ENCODE measurements at regions of chr5 and their contacts with region 1.

Region 1: GRCh38 chr5:134609232-134609851 is 23.3 kb downstream of the SAR1B start:
- DNase-seq: no peak
- H3K4me3 ChIP-seq: no peak overlapping the region
- H3K27ac ChIP-seq: no peak overlapping the region
- H3K4me1 ChIP-seq: no peaks in the 10 kb centered on the region
- H3K27me3 ChIP-seq: no peaks in the 10 kb centered on the region
- CTCF ChIP-seq: no peak

Region 2: GRCh38 chr5:134626369-134627014 is 17.1 kb after region 1 on chr5:
- CTCF ChIA-PET with region 1: no interaction called
- POLR2A ChIA-PET with region 1: interaction called, 14 read pairs
- intact Hi-C with region 1: no loop called
- DNase-seq: no peak
- H3K4me3 ChIP-seq: no peak overlapping the region
- H3K27ac ChIP-seq: no peak overlapping the region
- H3K4me1 ChIP-seq: no peaks in the 10 kb centered on the region
- H3K27me3 ChIP-seq: no peaks in the 10 kb centered on the region
- CTCF ChIP-seq: no peak

Region 3: DNA sequence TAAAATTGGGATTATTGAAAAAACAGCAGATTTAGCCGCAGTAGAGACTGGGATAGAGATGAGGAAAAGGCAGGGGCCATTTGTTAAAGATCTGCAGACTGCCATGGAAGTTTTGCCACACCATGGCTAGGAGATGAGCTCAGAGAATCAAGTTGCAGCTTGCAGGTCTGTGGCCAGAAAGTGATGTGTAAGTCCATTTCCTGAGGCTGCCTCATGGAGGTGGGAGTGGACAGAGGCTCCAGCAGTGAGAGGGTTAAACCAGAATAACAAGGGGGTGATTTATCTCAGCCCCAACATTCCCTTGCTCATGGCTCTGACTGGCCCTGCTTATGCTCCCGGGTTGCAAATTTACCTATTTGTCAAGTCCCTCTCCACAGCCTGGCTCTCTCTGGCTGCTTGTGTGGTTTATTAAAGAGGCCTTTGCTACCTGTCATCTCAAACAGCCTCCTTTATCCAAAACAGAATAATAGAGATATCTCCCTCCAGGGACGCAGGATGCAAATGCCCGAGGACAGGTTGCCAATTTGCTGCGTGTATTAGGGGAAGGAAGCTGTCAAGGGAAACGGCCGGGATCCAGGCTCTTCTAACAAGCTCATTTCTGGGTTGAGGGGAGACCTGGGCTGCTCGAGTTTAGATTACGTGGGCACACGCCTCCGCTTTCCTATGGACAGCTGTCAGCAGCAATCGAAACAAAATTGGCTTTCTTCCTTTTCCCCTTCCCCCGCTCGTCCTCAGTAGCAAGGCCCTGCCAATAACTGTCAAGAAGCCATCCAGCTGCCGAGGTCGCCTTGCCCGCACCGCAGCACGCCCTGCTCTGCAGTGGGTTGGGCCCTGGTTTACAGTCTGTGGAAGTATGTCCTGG is 497.5 kb after region 1 on chr5:
- CTCF ChIA-PET with region 1: no interaction called
- POLR2A ChIA-PET with region 1: interaction called, 19 read pairs
- intact Hi-C with region 1: no loop called
- DNase-seq: no peak
- H3K4me3 ChIP-seq: no peak overlapping the region
- H3K27ac ChIP-seq: no peak overlapping the region
- H3K4me1 ChIP-seq: peaks cover 3% of the 10 kb centered on the region
- H3K27me3 ChIP-seq: no peaks in the 10 kb centered on the region
- CTCF ChIP-seq: no peak

Region 4: DNA sequence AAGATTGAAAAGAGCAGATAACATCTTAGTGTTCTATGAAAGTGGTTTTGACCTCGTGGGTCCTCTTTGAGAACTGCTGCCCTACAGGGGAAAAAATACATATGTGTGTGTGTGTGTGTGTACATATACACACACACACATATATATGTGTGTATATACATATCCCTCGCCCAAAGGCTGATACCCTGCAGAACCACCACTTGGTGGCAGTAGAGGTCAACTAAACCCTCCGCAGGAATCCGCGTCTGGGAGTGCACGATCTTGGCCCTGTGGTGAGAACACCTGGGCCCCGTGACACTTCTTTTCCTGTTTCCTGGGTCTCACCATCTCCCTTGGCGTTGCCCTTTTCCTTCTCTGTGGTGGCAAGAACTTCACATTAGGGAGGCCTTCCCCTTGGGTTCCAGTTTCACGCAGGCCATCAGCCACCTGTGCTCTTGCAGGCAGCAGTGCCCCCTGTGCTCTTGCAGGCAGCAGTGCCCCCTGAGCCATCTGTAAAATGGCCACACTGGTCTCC is 1278.1 kb after region 1 on chr5:
- CTCF ChIA-PET with region 1: no interaction called
- POLR2A ChIA-PET with region 1: no interaction called
- intact Hi-C with region 1: no loop called
- DNase-seq: peak; percentile 77
- H3K4me3 ChIP-seq: no peak overlapping the region
- H3K27ac ChIP-seq: no peak overlapping the region
- H3K4me1 ChIP-seq: no peaks in the 10 kb centered on the region
- H3K27me3 ChIP-seq: peaks cover 18% of the 10 kb centered on the region
- CTCF ChIP-seq: peak; percentile 87

Measured in A673 (cell line).